ENCODE measurements at regions of chr16 and their contacts with region 1.

Region 1: DNA sequence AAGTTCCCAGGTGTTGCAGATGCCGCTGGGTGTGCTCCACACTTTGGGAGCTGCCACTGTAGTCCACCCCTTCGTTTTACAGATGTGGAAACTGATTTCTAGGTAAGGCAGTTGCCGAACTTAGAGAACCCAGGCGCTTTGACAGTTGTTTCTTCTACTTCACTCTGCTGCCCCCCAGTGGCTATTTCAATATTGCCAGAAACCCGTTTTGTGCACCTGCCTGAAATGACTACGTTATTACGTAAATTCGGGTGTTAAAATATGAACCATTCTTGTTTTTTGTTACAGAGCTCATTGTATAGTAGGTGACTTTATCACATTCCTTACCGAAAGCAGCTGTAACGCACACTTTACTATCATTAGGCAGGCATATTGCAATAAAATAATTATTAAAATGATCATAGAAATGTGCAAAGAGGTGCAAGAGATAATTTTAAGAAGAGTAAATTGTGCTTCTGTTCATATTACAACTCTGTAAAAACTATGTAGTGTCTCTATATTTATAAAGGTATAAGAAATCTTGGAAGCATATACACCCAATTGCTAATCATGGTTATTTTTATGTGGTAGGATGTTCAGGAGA is 44.9 kb downstream of the OTOA start:
- DNase-seq: peak; percentile 47 to 93 (median 80)

Region 2: DNA sequence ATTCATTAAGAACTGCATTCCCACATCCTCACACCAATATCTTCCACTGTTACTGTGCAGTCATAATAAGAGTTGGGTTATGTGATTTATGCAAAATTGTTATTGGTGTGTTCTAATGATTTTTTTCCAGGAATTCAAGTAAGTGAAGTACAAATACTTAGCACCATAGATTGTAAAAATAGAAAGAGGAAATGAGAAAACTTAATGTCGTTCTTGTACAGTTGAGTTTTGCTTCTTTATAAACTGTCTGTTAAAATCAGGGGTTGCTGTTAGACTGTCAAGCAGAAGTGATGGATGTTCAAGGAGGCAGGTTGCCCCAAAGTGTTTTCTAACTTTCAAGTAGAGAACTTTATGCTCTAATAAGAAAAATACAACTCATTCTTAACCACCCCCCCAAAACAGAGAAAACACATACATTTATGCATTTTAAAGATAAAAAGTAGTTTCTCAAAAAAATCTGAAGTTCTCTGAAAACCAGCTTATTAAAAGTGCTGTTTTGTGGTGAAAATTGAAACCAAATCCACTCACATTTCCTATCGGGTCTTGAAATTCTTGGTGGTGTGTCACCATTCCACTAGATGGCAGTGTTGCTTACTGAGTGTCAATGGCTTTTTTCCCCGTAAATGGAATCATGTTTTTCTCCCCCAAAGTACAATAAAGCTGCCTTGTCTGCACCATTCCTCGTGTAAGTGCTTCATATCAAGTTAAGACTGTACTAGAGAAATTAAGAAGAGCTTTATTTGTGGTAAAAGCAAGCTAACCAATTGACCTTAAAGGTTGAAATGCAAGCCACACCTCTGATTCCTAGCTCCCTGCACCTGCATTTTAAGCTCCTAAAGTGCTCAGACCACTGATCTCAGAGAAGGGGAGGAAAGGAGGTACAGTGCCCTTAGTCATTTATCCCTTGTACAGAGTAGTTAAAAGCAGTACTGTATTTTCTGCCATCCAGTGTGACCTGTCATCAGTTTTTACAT is 51.5 kb before region 1 on chr16:
- intact Hi-C with region 1: loop called (anchors 5 kb)
- DNase-seq: peak in 22 of 42 donors; percentile 21 to 77 (median 47)

Region 3: DNA sequence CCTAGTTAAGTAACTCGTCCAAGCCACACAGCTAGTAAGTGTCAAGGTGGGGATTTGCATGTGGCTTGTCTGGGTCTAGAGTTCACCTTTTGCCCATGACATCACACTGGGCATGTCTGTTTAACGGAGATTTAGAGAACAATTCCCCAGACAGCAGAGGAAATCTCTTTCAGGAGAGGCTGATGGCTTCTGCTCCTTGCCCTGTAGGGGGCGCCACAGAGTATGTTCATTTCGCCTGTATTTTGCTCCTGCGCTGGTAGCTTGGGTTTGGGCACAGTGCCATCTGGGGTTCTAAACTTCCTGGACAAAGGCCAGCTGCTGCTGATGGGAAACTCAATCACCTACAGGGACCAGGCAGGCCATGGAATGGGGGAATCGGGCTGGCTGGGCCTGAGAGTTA is 24.4 kb before region 1 on chr16:
- intact Hi-C with region 1: no loop called
- DNase-seq: no peak

Measured in head of caudate nucleus (tissue), 42 donors.